AG04450 (cell line): ENCODE measurements at regions of chr18 and their contacts with region 1.

Region 1: DNA sequence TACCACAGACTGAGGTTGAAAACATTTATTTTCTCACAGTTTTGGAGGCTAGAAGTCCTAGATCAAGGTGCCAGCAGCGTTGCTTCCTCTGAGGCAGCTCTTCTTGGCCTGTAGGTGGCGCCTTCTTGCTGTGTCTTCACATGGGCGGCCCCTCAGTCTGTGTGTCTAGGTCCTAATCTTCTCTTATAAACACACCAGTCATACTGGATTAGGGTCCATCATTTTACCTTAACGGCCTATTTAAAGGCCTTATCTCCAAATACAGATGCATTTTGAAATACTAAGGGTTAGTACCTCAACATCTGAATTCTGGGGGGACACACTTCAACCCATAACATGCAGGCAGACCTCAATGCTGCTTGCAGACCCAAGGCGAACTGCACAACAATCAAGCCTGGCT is 4.4 kb upstream of the RMC1 start:
- DNase-seq: peak; percentile 26
- H3K4me3 ChIP-seq: no peak overlapping the region
- H3K27ac ChIP-seq: peak overlapping the region; percentile 3
- H3K27me3 ChIP-seq: no peaks in the 10 kb centered on the region
- CTCF ChIP-seq: peak; percentile 83

Region 2: DNA sequence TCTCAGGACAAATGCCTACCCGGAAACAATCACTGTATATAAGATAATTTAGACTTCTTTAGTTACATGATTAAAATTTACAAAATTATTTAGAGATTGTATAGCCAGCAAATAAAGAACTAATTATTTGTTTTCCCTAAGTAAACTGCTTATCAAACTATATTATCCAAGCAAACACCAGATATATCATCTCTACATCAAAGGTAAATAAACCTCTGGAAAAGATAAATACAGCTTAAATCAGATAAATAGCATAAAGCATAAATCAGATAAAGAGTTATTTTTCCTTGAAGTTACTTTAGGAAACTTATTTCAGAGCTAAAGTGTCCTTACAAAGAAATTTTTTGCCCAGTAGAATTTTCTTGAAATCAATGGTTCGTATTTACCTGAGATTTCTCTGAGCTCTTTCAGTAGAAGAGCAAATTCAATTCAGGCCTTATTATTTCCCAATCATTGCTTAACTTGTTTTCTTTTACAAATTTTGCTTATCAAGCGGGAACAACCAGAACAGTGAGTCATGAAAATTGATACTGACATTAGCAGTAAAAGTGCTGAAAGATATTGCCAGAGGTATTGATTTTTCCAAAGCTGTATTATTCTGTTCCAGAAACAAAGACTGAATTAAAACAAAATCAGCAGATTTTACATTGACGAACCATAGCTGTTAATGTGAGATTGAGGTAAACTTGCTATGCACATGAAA is 56.1 kb before region 1 on chr18:
- CTCF ChIA-PET with region 1: interaction called, 10 read pairs
- POLR2A ChIA-PET with region 1: no interaction called
- DNase-seq: no peak
- H3K4me3 ChIP-seq: no peak overlapping the region
- H3K27ac ChIP-seq: no peak overlapping the region
- H3K27me3 ChIP-seq: peaks cover 6% of the 10 kb centered on the region
- CTCF ChIP-seq: no peak

Region 3: GRCh38 chr18:23487738-23488570 is 10.9 kb before region 1 on chr18:
- CTCF ChIA-PET with region 1: interaction called, 15 read pairs
- POLR2A ChIA-PET with region 1: interaction called, 7 read pairs
- DNase-seq: no peak
- H3K4me3 ChIP-seq: peak overlapping the region; percentile 29; the same call in 1 of the 2 replicates
- H3K27ac ChIP-seq: no peak overlapping the region
- H3K27me3 ChIP-seq: no peaks in the 10 kb centered on the region
- CTCF ChIP-seq: no peak